Breast epithelium (tissue), 4 donors: ENCODE measurements at regions of chr1 and their contacts with region 1.

Region 1: GRCh38 chr1:79133774-79134364 is 127.3 kb upstream of the ADGRL4 start:
- DNase-seq: no peak
- H3K4me3 ChIP-seq: no peak overlapping the region
- H3K27ac ChIP-seq: no peak overlapping the region
- H3K4me1 ChIP-seq: no peaks in the 10 kb centered on the region
- H3K27me3 ChIP-seq: no peaks in the 10 kb centered on the region
- CTCF ChIP-seq: no peak
- POLR2A ChIP-seq: no peak

Region 2: DNA sequence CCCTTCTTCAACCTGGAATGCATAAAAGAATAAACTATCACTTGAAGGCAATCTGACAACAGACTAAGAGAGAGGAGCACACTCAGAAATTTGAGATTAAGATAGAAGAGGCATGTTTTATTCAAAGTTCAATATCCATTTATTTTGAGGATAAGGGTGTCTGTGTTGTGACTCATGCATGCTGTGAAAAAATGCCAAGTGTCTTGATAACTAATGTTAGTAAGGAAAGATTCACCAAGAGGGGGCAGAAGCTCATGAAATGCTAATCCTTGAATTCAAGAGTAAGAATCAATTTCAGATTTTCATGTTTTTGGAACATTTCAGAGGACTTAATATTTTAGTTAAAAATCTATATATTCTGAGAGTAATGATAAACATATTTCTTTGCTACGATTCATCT is 390.2 kb before region 1 on chr1:
- intact Hi-C with region 1: loop called (anchors 5 kb)
- DNase-seq: no peak
- H3K4me3 ChIP-seq: no peak overlapping the region
- H3K27ac ChIP-seq: no peak overlapping the region
- H3K4me1 ChIP-seq: no peaks in the 10 kb centered on the region
- H3K27me3 ChIP-seq: no peaks in the 10 kb centered on the region
- CTCF ChIP-seq: no peak
- POLR2A ChIP-seq: no peak

Region 3: GRCh38 chr1:78950801-78951200 is 183.1 kb before region 1 on chr1:
- intact Hi-C with region 1: no loop called
- DNase-seq: no peak
- H3K4me3 ChIP-seq: no peak overlapping the region
- H3K27ac ChIP-seq: no peak overlapping the region
- H3K4me1 ChIP-seq: no peaks in the 10 kb centered on the region
- H3K27me3 ChIP-seq: peaks cover 0 to 5% of the 10 kb centered on the region in 2 donors
- CTCF ChIP-seq: no peak
- POLR2A ChIP-seq: no peak

Region 4: GRCh38 chr1:79197421-79197820 is 63.6 kb after region 1 on chr1:
- intact Hi-C with region 1: no loop called
- DNase-seq: no peak
- H3K4me3 ChIP-seq: no peak overlapping the region
- H3K27ac ChIP-seq: no peak overlapping the region
- H3K4me1 ChIP-seq: no peaks in the 10 kb centered on the region
- H3K27me3 ChIP-seq: no peaks in the 10 kb centered on the region
- CTCF ChIP-seq: no peak
- POLR2A ChIP-seq: no peak